CD4-positive, alpha-beta memory T cell (primary cell): ENCODE measurements at regions of chr21 and their contacts with region 1.

Region 1: DNA sequence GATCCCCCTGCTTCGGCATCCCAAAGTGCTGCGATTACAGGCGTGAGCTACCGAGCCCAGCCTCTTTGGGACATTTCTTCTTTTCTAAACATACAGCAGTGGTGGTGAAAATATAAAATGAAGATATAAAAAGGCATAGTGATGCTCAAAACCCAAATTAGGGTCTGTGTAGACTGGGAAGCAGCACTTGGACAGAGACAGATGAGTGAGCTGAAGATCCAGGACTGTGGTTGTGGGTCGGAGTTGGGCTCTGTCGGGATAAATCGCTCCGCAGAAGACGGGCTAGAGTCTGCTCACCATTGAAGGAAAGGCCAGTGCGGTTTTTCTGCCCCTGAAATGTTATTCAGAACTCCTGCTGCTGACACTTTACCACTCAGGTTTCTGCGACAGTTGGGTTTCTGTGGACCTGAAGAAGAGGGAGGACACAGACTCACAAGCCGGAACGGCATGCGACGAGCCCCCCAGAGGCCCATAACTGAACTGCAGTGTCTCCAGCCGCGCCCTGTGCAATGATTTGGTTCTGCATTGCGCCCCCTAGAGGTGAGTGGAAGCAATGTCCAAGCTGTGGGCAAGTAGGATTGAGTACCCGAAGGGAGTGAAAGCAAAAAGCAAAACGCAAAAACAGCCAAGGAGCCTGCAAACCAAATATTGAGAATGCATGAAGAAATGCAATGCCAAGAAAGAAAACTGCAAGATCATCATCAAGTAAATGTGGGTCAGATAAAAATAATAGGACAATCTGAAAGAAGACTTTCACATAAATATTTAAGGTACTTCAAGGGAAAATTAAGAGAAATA is 66.6 kb downstream of the GABPA start:
- DNase-seq: peak; percentile 82 to 85 (median 83)
- H3K4me3 ChIP-seq: no peak overlapping the region
- H3K4me3 Mint-ChIP-seq: peak overlapping the region in 6 of 8 donors; percentile 5 to 68 (median 51)
- H3K27ac ChIP-seq: no peak overlapping the region
- H3K27ac Mint-ChIP-seq: peak overlapping the region in 3 of 7 donors; percentile 1 to 61 (median 30)
- H3K4me1 ChIP-seq: peaks cover 4% of the 10 kb centered on the region
- H3K4me1 Mint-ChIP-seq: peaks cover 5 to 9% (median 7%) of the 10 kb centered on the region in 4 donors
- H3K27me3 ChIP-seq: no peaks in the 10 kb centered on the region
- H3K27me3 Mint-ChIP-seq: peaks cover 13 to 14% of the 10 kb centered on the region in 2 donors

Region 2: GRCh38 chr21:24948186-24948585 is 853.2 kb before region 1 on chr21:
- CTCF ChIA-PET with region 1: no interaction called
- POLR2A ChIA-PET with region 1: no interaction called
- intact Hi-C with region 1: no loop called
- DNase-seq: no peak
- H3K4me3 ChIP-seq: no peak overlapping the region
- H3K4me3 Mint-ChIP-seq: no peak overlapping the region
- H3K27ac ChIP-seq: no peak overlapping the region
- H3K27ac Mint-ChIP-seq: no peak overlapping the region
- H3K4me1 ChIP-seq: no peaks in the 10 kb centered on the region
- H3K4me1 Mint-ChIP-seq: no peaks in the 10 kb centered on the region
- H3K27me3 ChIP-seq: no peaks in the 10 kb centered on the region
- H3K27me3 Mint-ChIP-seq: no peaks in the 10 kb centered on the region

Region 3: DNA sequence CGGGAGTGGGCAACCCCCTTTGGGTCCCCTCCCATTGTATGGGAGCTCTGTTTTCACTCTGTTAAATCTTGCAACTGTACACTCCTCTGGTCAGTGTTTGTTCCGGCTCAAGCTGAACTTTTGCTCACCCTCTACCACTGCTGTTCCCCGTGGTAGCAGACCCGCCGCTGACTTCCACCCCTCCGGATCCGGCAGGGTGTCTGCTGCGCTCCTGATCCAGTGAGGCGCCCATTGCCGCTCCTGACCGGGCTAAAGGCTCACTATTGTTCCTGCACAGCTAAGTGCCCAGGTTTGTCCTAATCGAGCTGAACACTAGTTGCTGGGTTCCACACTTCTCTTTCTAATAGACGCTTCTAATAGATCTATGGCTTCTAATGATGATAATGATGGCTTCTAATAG is 682.8 kb before region 1 on chr21:
- CTCF ChIA-PET with region 1: no interaction called
- POLR2A ChIA-PET with region 1: no interaction called
- intact Hi-C with region 1: no loop called
- DNase-seq: no peak
- H3K4me3 ChIP-seq: no peak overlapping the region
- H3K4me3 Mint-ChIP-seq: no peak overlapping the region
- H3K27ac ChIP-seq: no peak overlapping the region
- H3K27ac Mint-ChIP-seq: no peak overlapping the region
- H3K4me1 ChIP-seq: no peaks in the 10 kb centered on the region
- H3K4me1 Mint-ChIP-seq: no peaks in the 10 kb centered on the region
- H3K27me3 ChIP-seq: no peaks in the 10 kb centered on the region
- H3K27me3 Mint-ChIP-seq: no peaks in the 10 kb centered on the region

Region 4: GRCh38 chr21:25528510-25528909 is 272.9 kb before region 1 on chr21:
- CTCF ChIA-PET with region 1: no interaction called
- POLR2A ChIA-PET with region 1: no interaction called
- intact Hi-C with region 1: no loop called
- DNase-seq: no peak
- H3K4me3 ChIP-seq: no peak overlapping the region
- H3K4me3 Mint-ChIP-seq: no peak overlapping the region
- H3K27ac ChIP-seq: no peak overlapping the region
- H3K27ac Mint-ChIP-seq: no peak overlapping the region
- H3K4me1 ChIP-seq: no peaks in the 10 kb centered on the region
- H3K4me1 Mint-ChIP-seq: no peaks in the 10 kb centered on the region
- H3K27me3 ChIP-seq: no peaks in the 10 kb centered on the region
- H3K27me3 Mint-ChIP-seq: no peaks in the 10 kb centered on the region

Region 5: DNA sequence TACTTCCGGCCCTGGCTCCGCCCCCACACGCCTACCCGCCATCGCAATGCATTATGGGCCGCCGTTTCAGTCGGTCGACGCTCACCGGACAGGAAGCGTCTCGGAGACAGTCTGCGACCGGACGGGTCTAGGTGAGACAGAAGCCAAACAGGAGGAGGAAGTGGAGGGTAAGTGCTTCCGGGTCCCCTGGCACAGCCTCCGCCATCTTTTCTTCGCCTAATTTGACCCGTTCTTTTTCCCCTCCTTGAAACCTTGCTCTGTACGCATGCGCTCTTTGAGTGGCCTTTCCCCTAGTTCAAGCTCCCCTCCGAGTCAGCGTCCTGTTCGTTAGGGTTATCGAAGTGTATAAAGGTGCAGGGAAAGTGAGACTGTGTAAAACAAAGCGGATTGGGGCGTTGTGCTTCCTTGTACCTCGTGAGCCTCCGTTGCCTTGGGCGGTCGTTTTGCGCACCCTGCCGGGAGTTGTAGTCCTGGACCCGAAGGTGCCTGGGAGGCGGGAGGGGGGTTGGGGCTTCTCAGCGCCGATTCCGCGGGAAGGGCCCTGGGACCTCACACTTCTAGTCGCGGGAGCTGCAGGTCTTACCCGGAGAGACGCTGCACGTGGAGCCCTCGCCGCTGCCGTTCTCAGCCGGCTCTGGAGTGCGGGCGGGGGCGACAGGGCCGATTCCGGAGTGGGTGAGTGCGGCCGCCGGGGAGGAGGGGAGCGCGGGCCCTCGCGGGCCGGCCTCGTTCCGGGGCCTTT is 66.3 kb before region 1 on chr21 and contains the starts of genes ATP5PF and GABPA:
- CTCF ChIA-PET with region 1: interaction called, 3 read pairs
- POLR2A ChIA-PET with region 1: no interaction called
- intact Hi-C with region 1: loop called (anchors 2 kb)
- DNase-seq: peak; percentile 96 to 98 (median 98)
- H3K4me3 ChIP-seq: peak within 1 kb of the TSS; percentile 77 to 93
- H3K4me3 Mint-ChIP-seq: peak within 1 kb of the TSS; percentile 99 to 100 (median 100)
- H3K27ac ChIP-seq: peak within 1 kb of the TSS; percentile 91
- H3K27ac Mint-ChIP-seq: peak within 1 kb of the TSS; percentile 99 to 100 (median 100)
- H3K4me1 ChIP-seq: peaks cover 52% of the 10 kb centered on the region
- H3K4me1 Mint-ChIP-seq: peaks cover 38 to 71% (median 53%) of the 10 kb centered on the region in 4 donors
- H3K27me3 ChIP-seq: no peaks in the 10 kb centered on the region
- H3K27me3 Mint-ChIP-seq: peaks cover 3 to 4% of the 10 kb centered on the region in 2 donors
- total RNA-seq, gene ATP5PF: 56.6 to 64.1 TPM
- total RNA-seq, gene GABPA: 28.4 to 29.4 TPM

Region 6: DNA sequence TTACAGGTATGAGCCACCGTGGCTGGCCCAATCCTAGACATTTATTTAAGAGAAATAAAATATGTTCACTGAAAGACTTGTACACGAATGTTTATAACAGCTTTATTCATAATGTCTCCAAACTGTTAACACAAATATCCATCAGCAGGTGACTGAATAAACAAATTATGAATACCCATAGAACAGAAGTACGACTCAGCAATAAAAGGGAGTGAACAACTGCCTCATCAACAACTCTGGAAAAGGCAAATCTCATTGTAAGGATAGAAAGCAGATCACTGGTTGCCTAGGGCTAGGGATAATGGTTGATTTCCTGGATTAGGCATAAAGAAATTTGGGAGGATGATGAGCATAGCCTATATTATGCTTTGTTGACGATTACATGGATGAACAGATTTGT is 25.0 kb before region 1 on chr21:
- CTCF ChIA-PET with region 1: interaction called, 12 read pairs
- POLR2A ChIA-PET with region 1: no interaction called
- intact Hi-C with region 1: no loop called
- DNase-seq: no peak
- H3K4me3 ChIP-seq: no peak overlapping the region
- H3K4me3 Mint-ChIP-seq: no peak overlapping the region
- H3K27ac ChIP-seq: no peak overlapping the region
- H3K27ac Mint-ChIP-seq: no peak overlapping the region
- H3K4me1 ChIP-seq: no peaks in the 10 kb centered on the region
- H3K4me1 Mint-ChIP-seq: no peaks in the 10 kb centered on the region
- H3K27me3 ChIP-seq: no peaks in the 10 kb centered on the region
- H3K27me3 Mint-ChIP-seq: no peaks in the 10 kb centered on the region

Region 7: DNA sequence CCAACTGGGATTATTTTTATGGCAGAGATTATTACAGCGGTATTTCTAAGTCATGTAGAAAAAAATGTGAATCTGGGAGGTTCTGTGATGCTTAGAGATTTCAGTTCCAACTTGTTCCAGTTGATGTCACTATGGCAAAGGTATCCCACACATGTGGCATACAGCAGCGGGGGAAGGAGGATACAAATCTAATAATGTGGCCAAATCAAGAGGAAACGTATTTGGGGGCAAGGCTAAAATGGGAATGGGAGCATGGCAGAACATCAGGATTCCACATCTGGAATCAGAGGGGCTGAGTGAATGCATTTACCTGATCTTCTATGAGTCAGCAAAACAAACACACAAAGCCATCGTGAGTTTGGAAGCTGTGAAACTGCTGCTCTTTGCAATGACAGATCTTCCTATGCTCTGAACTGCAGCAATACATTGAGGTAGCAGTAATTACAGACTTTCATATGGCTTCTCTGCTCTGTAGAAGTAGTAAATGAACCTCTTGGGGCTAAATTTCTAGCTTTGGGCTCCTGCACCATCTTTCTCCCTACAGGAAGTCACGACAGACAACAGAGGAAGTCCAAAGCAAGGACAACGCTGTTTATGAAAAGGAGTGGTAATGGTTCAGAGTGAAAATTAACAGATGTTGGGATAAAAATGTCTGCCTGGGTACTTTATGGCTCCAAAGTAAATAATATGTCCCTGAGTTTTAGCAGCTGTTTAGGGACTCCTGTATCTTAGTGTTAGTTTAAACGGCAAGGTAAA is 11.1 kb before region 1 on chr21:
- CTCF ChIA-PET with region 1: interaction called, 37 read pairs
- POLR2A ChIA-PET with region 1: no interaction called
- intact Hi-C with region 1: loop called (anchors 1 kb)
- DNase-seq: peak in 3 of 5 donors; percentile 9 to 17 (median 10)
- H3K4me3 ChIP-seq: peak overlapping the region in 1 of 2 donors; percentile 35
- H3K4me3 Mint-ChIP-seq: peak overlapping the region; percentile 68 to 88 (median 80)
- H3K27ac ChIP-seq: no peak overlapping the region
- H3K27ac Mint-ChIP-seq: peak overlapping the region in 2 of 7 donors; percentile 15 to 32
- H3K4me1 ChIP-seq: peaks cover 9% of the 10 kb centered on the region
- H3K4me1 Mint-ChIP-seq: peaks cover 7 to 12% (median 10%) of the 10 kb centered on the region in 4 donors
- H3K27me3 ChIP-seq: no peaks in the 10 kb centered on the region
- H3K27me3 Mint-ChIP-seq: peaks cover 10 to 13% of the 10 kb centered on the region in 2 donors